Activated CD4-positive, alpha-beta memory T cell treated with anti-CD3 and anti-CD28 coated beads for 36 hours (primary cell): ENCODE measurements at regions of chr1 and their contacts with region 1.

Region 1: GRCh38 chr1:86704458-86704971 is at the start of gene SH3GLB1:
- DNase-seq: peak; percentile 91
- H3K4me3 Mint-ChIP-seq: peak within 1 kb of the TSS; percentile 100
- H3K27ac Mint-ChIP-seq: peak within 1 kb of the TSS; percentile 98
- H3K4me1 Mint-ChIP-seq: peaks cover 41% of the 10 kb centered on the region
- H3K27me3 Mint-ChIP-seq: no peaks in the 10 kb centered on the region
- total RNA-seq, gene SH3GLB1: 64.3 to 65.3 TPM

Region 2: GRCh38 chr1:86499987-86500593 is 204.4 kb before region 1 on chr1:
- CTCF ChIA-PET with region 1: interaction called, 13 read pairs
- POLR2A ChIA-PET with region 1: no interaction called
- intact Hi-C with region 1: loop called (anchors 1 kb)
- DNase-seq: no peak
- H3K4me3 Mint-ChIP-seq: no peak overlapping the region
- H3K27ac Mint-ChIP-seq: no peak overlapping the region
- H3K4me1 Mint-ChIP-seq: peaks cover 14% of the 10 kb centered on the region
- H3K27me3 Mint-ChIP-seq: peaks cover 13% of the 10 kb centered on the region

Region 3: GRCh38 chr1:86741947-86742572 is 37.5 kb after region 1 on chr1:
- CTCF ChIA-PET with region 1: interaction called, 12 read pairs
- POLR2A ChIA-PET with region 1: interaction called, 4 read pairs
- intact Hi-C with region 1: loop called (anchors 1 kb)
- DNase-seq: peak; percentile 32
- H3K4me3 Mint-ChIP-seq: no peak overlapping the region
- H3K27ac Mint-ChIP-seq: no peak overlapping the region
- H3K4me1 Mint-ChIP-seq: peaks cover 4% of the 10 kb centered on the region
- H3K27me3 Mint-ChIP-seq: no peaks in the 10 kb centered on the region

Region 4: DNA sequence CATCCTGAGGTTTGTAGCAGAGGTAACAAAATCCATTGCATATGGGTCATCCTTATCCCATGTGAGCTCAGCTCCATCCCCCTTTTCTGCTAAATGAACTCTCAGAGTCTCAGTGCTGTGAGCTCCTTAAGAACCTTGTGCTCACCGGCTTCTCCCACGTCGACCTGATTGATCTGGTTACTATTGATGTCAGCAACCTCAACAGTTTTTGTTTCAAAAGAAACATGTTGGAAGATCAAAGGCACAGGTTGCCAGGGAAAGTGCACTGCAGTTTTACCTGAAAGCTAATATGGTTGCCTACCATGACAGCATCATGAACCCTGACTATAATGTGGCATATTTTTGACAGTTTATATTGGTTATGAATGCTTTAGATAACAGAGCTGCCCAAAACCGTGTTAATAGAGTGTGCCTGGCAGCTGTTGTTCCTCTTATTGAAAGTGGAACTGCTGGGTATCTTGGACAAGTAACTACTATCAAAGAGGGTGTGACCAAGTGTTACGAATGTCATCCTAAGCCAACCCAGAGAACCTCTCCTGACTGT is 341.3 kb after region 1 on chr1:
- CTCF ChIA-PET with region 1: interaction called, 4 read pairs
- POLR2A ChIA-PET with region 1: interaction called, 5 read pairs
- intact Hi-C with region 1: loop called (anchors 10 kb)
- DNase-seq: peak; percentile 75
- H3K4me3 Mint-ChIP-seq: peak overlapping the region; percentile 45
- H3K27ac Mint-ChIP-seq: peak overlapping the region; percentile 82
- H3K4me1 Mint-ChIP-seq: peaks cover 48% of the 10 kb centered on the region
- H3K27me3 Mint-ChIP-seq: no peaks in the 10 kb centered on the region

Region 5: GRCh38 chr1:87335175-87335884 is 630.8 kb after region 1 on chr1:
- CTCF ChIA-PET with region 1: no interaction called
- POLR2A ChIA-PET with region 1: interaction called, 6 read pairs
- intact Hi-C with region 1: loop called (anchors 10 kb)
- DNase-seq: peak; percentile 75
- H3K4me3 Mint-ChIP-seq: peak overlapping the region; percentile 76
- H3K27ac Mint-ChIP-seq: peak overlapping the region; percentile 91
- H3K4me1 Mint-ChIP-seq: peaks cover 60% of the 10 kb centered on the region
- H3K27me3 Mint-ChIP-seq: peaks cover 6% of the 10 kb centered on the region